ENCODE measurements at regions of chr9 and their contacts with region 1.

Region 1: GRCh38 chr9:91312717-91313344 is 48.9 kb downstream of the AUH start:
- DNase-seq: no peak
- H3K4me3 ChIP-seq: no peak overlapping the region
- H3K27ac ChIP-seq: no peak overlapping the region
- H3K4me1 ChIP-seq: no peaks in the 10 kb centered on the region
- CTCF ChIP-seq: no peak

Region 2: DNA sequence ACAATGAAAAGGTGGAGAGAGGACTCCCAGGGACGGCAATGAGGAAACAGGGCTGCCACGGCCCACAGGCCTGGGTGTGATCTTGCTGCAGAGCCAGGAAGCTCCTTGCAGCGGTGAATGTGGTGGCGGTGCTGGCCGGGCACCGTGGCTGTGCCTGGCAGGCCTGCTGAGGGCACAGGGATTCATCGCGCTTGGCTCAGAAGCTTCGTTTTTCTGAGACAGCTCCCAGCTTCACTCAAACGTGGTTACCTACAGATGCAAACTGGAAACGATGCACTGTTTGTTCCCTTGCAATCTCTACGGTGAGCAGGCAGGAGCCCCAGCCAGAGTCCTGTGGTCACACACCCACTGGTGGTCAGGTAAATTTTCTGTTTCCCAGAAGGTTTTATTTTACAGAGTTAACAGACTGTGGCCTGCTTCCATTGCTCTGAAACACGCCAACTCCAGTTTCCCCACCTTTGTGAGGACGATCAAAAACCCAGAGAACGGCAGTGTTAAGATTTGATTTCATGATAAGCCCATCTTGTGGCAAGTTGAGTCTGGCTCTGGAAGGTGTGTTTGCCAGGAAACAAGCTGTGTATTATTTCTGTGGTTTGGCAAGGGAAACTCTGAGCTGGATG is 135.1 kb before region 1 on chr9:
- CTCF ChIA-PET with region 1: no interaction called
- POLR2A ChIA-PET with region 1: no interaction called
- intact Hi-C with region 1: no loop called
- DNase-seq: no peak
- H3K4me3 ChIP-seq: no peak overlapping the region
- H3K27ac ChIP-seq: no peak overlapping the region
- H3K4me1 ChIP-seq: peaks cover 40% of the 10 kb centered on the region
- CTCF ChIP-seq: no peak

Region 3: DNA sequence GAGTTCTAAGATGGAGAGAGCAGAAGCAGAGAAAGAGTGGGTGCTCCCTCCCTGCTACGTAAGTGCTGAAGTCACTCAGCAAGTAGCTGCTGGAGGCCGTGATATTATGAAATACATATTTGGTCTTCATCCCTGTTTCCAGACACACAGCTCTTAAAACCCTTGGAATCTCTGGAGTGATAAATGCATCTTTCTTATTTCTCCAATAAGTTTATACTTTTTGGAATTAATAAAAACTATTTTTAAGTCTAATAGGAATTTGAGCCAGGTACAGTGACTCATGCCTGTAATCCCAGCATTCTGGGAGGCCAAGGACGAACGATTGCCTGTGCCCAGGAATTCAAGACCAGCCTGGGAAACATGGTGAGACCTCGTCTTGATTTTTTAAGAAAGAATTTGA is 11.7 kb before region 1 on chr9:
- CTCF ChIA-PET with region 1: no interaction called
- POLR2A ChIA-PET with region 1: interaction called, 12 read pairs
- intact Hi-C with region 1: no loop called
- DNase-seq: no peak
- H3K4me3 ChIP-seq: no peak overlapping the region
- H3K27ac ChIP-seq: no peak overlapping the region
- H3K4me1 ChIP-seq: peaks cover 9% of the 10 kb centered on the region
- CTCF ChIP-seq: no peak

Measured in OCI-LY7 (cell line).